ENCODE measurements at regions of chr17 and their contacts with region 1.

Region 1: DNA sequence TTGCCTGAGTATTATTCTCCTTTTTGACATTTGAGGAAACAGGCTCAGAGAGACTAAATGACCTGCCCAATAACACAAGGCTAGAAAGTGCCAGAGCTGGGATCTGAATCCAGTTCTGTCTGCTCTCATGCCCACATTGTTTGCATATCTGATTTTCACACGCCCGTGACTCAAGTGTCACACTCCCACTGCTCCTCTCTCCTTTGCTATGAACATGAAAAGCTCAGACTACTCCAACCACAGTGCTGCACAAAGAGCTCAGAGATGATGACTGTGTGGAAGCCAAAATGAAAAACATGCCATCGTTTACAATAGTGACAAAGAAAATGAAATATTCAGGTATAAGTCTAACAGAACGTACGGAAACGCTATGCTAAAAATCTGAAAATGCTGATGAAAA is 107.9 kb downstream of the SMG6 start:
- DNase-seq: no peak
- H3K4me3 ChIP-seq: no peak overlapping the region
- H3K27ac ChIP-seq: no peak overlapping the region
- H3K4me1 ChIP-seq: no peaks in the 10 kb centered on the region
- H3K27me3 ChIP-seq: no peaks in the 10 kb centered on the region
- CTCF ChIP-seq: no peak
- POLR2A ChIP-seq: no peak

Region 2: GRCh38 chr17:2215616-2216364 is 20.1 kb after region 1 on chr17:
- intact Hi-C with region 1: loop called (anchors 1 kb)
- DNase-seq: peak in 1 of 2 donors; percentile 53
- H3K4me3 ChIP-seq: peak overlapping the region; percentile 4 to 58 (median 27)
- H3K27ac ChIP-seq: peak overlapping the region; percentile 76 to 91
- H3K4me1 ChIP-seq: peaks cover 0 to 17% of the 10 kb centered on the region in 2 donors
- H3K27me3 ChIP-seq: no peaks in the 10 kb centered on the region
- CTCF ChIP-seq: no peak
- POLR2A ChIP-seq: no peak